Calu3 (cell line): ENCODE measurements at regions of chr5 and their contacts with region 1.

Region 1: DNA sequence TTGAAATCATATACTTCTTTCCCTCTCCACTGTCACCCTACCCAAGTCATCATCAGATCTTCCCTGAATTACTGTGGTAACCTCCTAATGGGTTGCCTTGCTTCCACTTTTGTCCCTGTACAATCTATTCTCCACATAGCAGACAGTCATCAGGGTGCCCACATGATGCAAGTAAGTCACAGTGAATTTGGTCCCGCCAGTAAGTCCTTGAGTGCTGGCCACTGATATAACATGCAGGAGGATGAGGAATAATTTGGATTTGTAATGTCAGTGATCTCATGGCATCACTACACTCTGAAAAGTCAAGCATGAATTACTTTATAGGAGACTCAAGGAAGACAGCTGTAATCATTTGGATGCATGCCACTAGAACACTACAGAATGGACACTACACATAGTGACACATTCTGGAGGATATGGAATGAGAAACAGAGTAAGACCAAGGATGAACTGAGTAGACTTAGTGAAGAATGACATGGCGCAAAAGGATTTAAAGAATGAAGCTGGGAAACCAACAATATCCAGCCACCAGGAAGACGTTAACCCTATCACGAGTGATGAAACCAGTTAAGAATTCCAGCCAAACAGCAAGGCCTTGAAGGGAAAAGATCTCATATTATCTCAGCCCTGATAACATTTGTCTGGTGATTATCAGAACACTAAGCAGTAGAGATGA is 28.6 kb downstream of the MARCHF3 start:
- DNase-seq: no peak
- H3K4me3 Mint-ChIP-seq: no peak overlapping the region
- H3K27ac Mint-ChIP-seq: peak overlapping the region; percentile 96
- H3K4me1 Mint-ChIP-seq: peaks cover 38% of the 10 kb centered on the region
- H3K27me3 Mint-ChIP-seq: no peaks in the 10 kb centered on the region
- CTCF ChIP-seq: no peak

Region 2: DNA sequence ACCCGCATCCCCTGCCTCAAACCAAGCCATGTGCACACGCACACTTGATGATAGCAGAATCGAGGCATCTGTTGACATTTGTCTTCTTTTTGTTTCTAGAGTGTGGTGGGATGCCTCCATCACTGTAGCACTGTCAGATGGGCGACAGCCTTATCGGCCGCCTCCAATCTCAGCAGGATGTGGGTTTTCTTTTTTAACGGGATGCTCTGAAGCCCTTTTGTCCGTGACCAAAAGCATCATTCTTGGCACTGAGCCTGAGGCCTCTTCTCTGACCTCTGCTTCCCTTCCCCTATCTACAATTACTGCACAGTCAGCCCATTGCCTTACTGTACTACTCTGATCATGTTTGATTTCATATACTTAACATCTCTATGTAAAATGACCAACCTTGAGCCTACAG is 146.5 kb before region 1 on chr5:
- CTCF ChIA-PET with region 1: no interaction called
- intact Hi-C with region 1: no loop called
- DNase-seq: no peak
- H3K4me3 Mint-ChIP-seq: no peak overlapping the region
- H3K27ac Mint-ChIP-seq: no peak overlapping the region
- H3K4me1 Mint-ChIP-seq: no peaks in the 10 kb centered on the region
- H3K27me3 Mint-ChIP-seq: no peaks in the 10 kb centered on the region
- CTCF ChIP-seq: no peak

Region 3: DNA sequence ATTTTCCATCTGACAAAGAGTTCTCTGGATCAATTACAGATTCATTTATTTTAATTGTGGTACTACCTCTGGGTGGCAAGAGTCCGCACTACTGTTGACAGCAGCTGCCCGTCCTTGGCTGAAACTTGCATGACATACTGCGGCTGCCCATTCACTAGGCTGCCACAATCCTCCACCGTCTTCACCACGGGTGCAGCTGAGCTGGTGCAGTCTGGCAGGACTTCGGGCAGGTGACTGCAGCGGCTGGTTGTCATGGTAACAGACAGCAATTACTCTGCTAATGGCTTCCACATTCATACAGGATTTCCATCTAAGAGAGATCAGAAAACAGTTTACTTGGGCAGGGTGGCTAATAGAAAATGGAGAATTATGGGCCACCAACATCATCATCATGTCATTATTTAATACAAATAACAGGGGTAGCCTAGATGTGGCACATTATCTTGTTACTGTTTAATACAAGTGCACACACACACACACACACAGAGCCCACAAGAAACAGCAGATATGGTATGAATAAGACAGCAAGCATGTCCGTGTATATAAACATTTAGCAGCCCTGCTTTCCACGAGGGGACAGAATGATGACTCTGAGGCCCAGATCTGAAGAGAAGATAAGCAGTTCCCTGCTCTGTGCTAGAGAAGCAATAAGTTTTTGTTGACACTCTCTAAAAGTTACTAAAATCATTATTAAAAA is 83.7 kb before region 1 on chr5:
- CTCF ChIA-PET with region 1: no interaction called
- intact Hi-C with region 1: loop called (anchors 5 kb)
- DNase-seq: peak; percentile 67
- H3K4me3 Mint-ChIP-seq: peak overlapping the region; percentile 50
- H3K27ac Mint-ChIP-seq: peak overlapping the region; percentile 63
- H3K4me1 Mint-ChIP-seq: peaks cover 33% of the 10 kb centered on the region
- H3K27me3 Mint-ChIP-seq: no peaks in the 10 kb centered on the region
- CTCF ChIP-seq: no peak

Region 4: DNA sequence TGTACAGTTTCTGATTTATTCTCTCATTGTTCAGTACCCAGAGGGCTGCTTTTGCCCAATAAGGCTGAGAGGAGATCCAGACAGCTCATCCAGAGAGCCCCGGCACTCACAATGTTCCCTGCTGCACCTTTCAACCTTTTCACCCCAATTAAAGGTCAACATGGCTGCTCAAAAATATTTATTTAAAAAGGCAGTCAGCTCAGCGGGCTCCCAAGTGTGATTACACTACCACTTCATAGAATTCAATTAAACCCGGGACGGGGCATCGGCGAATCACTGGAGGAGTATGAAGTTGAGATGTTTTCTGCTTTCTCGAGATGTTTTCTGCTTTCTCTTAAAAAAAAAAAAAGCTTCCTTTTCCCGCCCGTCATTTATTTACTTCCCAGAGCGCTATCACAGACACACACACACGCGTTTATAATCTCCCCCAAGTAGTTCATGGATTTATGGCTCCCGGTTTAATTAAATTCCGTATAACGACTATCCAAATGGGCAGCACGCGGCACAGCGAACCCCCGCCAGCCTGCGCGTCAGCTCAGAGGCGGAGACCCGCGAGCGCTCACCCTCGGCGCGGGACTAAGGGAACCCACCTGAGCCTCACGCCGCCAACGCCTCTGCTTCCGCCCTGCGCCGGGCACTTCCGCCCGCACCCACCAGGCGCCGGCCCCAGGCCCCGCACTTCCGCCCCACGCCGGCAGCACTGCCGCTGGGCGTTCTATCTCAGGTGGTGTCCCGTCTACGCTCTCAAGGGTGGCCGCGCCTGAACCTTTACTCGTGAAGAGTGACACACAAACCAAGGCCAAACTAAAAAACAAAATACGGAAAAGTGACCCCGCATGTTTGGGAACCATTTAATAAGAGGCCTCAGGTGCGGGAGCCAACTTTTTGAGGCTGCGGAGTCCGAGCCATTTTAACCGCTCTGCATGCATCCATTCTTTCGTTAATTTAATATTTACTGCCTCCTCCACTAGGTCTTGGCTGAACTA is 71.4 kb after region 1 on chr5 and contains the start of gene C5orf63:
- CTCF ChIA-PET with region 1: no interaction called
- intact Hi-C with region 1: loop called (anchors 2 kb)
- DNase-seq: peak; percentile 67
- H3K4me3 Mint-ChIP-seq: peak within 1 kb of the TSS; percentile 91
- H3K27ac Mint-ChIP-seq: peak within 1 kb of the TSS; percentile 90
- H3K4me1 Mint-ChIP-seq: no peaks in the 10 kb centered on the region
- H3K27me3 Mint-ChIP-seq: no peaks in the 10 kb centered on the region
- CTCF ChIP-seq: no peak
- total RNA-seq, gene C5orf63: 11.0 and 13.2 TPM in 2 replicates